Left ventricle myocardium inferior (tissue), 1 donor: ENCODE measurements at regions of chr12 and their contacts with region 1.

Region 1: GRCh38 chr12:15856097-15856982 is 25.8 kb upstream of the STRAP start:
- DNase-seq: no peak
- H3K4me3 ChIP-seq: no peak overlapping the region
- H3K27ac ChIP-seq: peak overlapping the region; percentile 55
- H3K4me1 ChIP-seq: peaks cover 4% of the 10 kb centered on the region
- H3K27me3 ChIP-seq: peaks cover 14% of the 10 kb centered on the region
- CTCF ChIP-seq: peak; percentile 88

Region 2: GRCh38 chr12:15276088-15276698 is 580.1 kb before region 1 on chr12:
- intact Hi-C with region 1: loop called (anchors 5 kb)
- DNase-seq: no peak
- H3K4me3 ChIP-seq: no peak overlapping the region
- H3K27ac ChIP-seq: no peak overlapping the region
- H3K4me1 ChIP-seq: peaks cover 16% of the 10 kb centered on the region
- H3K27me3 ChIP-seq: peaks cover 16% of the 10 kb centered on the region
- CTCF ChIP-seq: peak; percentile 80

Region 3: DNA sequence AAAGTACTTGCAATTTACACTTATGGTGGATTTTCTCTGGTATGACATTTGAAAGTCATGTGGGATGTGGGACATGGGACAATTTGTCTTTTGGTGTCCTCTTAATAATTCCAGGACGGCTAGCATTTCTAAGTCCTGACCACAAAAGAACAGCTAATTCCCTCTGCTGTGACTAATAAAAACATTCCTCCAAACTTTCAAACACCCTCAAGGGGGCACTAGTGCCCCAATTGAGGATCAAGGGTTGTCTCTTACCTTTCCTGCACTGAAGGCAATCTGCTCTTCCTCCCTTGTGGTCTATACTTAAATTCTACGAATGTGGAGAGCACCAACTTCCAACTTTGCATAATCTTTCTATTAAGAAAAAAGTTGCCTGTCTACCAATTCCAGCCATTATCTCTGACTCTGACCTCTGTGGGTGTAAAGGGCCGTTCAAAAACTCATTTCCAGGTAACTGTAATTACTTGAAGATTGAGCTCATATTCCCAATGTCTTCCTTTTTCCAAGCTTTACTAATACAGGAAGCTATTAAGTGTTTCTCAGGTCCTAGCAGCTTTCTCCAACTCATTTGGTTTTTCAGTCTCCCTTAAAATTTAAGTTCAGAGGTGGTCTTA is 323.9 kb before region 1 on chr12:
- intact Hi-C with region 1: loop called (anchors 5 kb)
- DNase-seq: no peak
- H3K4me3 ChIP-seq: no peak overlapping the region
- H3K27ac ChIP-seq: no peak overlapping the region
- H3K4me1 ChIP-seq: no peaks in the 10 kb centered on the region
- H3K27me3 ChIP-seq: no peaks in the 10 kb centered on the region
- CTCF ChIP-seq: peak; percentile 57

Region 4: DNA sequence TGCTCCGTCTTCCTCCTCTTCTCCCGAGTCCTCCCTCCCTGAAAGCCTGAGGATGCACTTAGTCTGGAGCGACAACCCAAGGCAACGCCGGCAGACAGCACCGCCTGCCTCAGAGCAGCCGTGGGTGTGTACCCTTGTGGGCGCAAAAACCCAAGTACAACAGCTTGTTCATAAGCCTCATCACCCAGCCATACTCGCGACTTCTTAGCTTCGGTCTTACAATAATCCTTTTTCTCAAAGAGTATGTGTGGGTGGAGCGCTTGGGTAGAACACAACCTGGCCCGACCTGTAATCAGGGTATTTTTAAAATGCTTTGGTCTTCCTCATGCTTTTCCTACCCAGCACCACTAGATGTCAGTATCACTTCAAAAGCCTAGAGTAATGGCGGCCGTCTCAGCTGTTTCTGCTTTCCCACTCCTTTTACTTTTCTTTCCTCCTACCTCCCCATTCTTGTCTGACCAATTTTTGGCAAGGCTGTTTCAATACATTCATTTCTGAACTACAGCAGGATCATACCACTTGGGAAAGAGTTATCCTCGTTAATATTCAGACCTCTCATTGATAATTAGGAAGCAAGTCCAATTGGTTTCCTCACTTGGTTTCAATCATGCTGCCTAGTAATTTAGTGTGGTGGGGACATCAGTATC is 266.0 kb before region 1 on chr12:
- intact Hi-C with region 1: loop called (anchors 2 kb)
- DNase-seq: no peak
- H3K4me3 ChIP-seq: peak overlapping the region; percentile 56
- H3K27ac ChIP-seq: peak overlapping the region; percentile 61
- H3K4me1 ChIP-seq: peaks cover 9% of the 10 kb centered on the region
- H3K27me3 ChIP-seq: peaks cover 32% of the 10 kb centered on the region
- CTCF ChIP-seq: peak; percentile 95

Region 5: DNA sequence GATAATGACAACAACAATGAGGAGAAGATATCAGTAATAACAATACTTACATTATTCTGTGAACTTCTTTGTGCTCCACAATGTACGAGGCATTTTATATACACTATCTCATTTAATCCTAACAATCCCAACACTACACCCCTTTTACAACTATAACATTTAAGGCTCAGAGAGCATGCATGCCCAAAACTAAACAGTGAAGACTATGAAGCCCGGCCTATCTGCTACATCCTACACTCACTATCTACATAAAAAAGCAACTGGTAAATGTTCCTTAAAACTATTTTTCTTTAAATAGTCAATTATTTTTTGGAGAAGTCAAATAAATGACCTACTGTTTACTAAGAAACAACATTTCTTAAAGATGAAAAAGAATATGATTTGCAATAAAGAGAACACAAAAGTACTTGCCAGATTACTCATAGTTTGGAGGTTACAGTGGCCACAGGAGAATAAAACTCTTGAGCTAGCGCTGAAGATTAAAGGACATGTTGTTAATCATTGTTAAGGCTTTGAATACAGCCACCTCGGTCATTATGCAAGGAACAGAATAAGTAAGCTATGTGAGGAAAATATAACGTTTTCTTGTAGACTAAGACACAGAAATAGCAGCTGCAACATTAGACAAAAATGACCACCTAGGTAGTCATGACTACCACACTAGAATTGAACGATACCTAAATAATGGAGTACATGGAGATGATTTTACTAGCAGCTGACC is 123.8 kb before region 1 on chr12:
- intact Hi-C with region 1: no loop called
- DNase-seq: no peak
- H3K4me3 ChIP-seq: no peak overlapping the region
- H3K27ac ChIP-seq: peak overlapping the region; percentile 33
- H3K4me1 ChIP-seq: peaks cover 4% of the 10 kb centered on the region
- H3K27me3 ChIP-seq: no peaks in the 10 kb centered on the region
- CTCF ChIP-seq: no peak